B cell (primary cell): ENCODE measurements at regions of chr9 and their contacts with region 1.

Region 1: DNA sequence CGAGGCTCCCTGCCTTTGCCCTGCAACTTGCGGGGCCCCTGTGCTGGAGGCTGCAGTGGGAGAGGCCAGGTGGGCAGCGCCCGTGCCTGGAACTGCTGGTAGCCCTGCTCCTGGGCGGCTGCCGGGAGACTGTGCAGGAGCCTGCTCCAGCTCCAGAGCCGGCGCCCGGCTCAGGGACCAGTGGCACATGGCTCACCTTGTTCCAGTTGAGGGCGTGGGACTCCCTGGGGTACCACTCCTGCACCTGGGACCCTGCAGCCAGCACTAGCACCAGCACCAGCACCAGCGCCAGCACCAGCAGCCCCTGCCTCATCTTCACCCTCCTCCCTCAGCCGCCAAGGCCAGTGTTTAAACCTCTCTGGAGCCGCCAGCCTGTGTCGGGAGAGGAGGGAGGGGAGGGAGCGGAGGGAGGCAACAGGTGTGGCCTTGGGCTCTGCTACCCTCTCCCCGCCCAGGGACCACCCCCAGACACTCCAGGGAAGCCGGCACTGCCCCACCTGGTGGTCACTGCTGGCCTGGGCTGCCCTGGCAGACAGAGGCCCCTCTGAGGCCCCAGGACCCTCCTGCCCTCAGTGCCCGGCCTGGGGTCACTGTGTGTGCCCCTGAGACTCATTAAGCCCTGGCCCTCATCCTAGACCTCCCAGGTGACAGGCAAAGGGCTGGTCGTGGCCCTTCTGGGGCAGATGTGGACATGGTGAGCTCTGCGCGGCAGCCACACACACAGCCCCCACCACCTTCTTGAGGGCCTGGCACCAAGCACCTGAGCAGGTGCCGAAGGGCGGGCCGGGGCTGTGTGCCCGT is at the start of gene LCN10:
- DNase-seq: no peak
- ATAC-seq: peak; percentile 5
- H3K4me3 ChIP-seq: peak within 1 kb of the TSS; percentile 31 to 97 (median 77)
- H3K4me3 Mint-ChIP-seq: peak within 1 kb of the TSS; percentile 91
- H3K27ac ChIP-seq: peak within 1 kb of the TSS; percentile 82 to 83
- H3K27ac Mint-ChIP-seq: peak within 1 kb of the TSS; percentile 94
- H3K4me1 ChIP-seq: peaks cover 26 to 55% of the 10 kb centered on the region in 2 donors
- H3K4me1 Mint-ChIP-seq: peaks cover 47% of the 10 kb centered on the region
- H3K27me3 ChIP-seq: no peaks in the 10 kb centered on the region
- H3K27me3 Mint-ChIP-seq: no peaks in the 10 kb centered on the region
- CTCF ChIP-seq: no peak
- total RNA-seq, gene LCN10: 70.7 and 76.3 TPM in 2 replicates

Region 2: DNA sequence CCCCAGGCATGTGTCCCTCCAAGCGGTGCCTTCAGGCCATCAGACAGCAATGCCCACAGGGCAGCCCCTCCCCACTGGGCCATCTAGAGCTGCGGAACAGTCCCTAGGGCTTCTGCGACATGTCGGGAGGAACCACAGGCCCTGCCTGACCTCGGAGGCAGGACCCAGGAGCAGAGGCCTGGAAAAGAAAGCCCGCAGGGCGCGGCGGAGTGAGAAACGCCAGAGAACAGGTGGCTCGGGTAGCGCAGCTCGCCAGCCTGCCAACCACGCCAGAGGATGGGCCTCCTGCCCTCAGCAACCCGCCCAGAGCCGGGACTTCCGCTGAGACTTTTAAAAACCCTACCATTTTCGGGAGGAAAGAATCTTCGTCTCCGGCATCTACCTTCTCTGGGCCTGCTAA is 14.5 kb after region 1 on chr9:
- CTCF ChIA-PET with region 1: interaction called, 25 read pairs
- POLR2A ChIA-PET with region 1: interaction called, 26 read pairs
- intact Hi-C with region 1: loop called (anchors 2 kb)
- DNase-seq: no peak
- ATAC-seq: peak; percentile 54
- H3K4me3 ChIP-seq: no peak overlapping the region
- H3K4me3 Mint-ChIP-seq: peak overlapping the region; percentile 81
- H3K27ac ChIP-seq: peak overlapping the region; percentile 50 to 80
- H3K27ac Mint-ChIP-seq: peak overlapping the region; percentile 95
- H3K4me1 ChIP-seq: peaks cover 61 to 79% of the 10 kb centered on the region in 2 donors
- H3K4me1 Mint-ChIP-seq: peaks cover 56% of the 10 kb centered on the region
- H3K27me3 ChIP-seq: no peaks in the 10 kb centered on the region
- H3K27me3 Mint-ChIP-seq: no peaks in the 10 kb centered on the region
- CTCF ChIP-seq: no peak

Region 3: DNA sequence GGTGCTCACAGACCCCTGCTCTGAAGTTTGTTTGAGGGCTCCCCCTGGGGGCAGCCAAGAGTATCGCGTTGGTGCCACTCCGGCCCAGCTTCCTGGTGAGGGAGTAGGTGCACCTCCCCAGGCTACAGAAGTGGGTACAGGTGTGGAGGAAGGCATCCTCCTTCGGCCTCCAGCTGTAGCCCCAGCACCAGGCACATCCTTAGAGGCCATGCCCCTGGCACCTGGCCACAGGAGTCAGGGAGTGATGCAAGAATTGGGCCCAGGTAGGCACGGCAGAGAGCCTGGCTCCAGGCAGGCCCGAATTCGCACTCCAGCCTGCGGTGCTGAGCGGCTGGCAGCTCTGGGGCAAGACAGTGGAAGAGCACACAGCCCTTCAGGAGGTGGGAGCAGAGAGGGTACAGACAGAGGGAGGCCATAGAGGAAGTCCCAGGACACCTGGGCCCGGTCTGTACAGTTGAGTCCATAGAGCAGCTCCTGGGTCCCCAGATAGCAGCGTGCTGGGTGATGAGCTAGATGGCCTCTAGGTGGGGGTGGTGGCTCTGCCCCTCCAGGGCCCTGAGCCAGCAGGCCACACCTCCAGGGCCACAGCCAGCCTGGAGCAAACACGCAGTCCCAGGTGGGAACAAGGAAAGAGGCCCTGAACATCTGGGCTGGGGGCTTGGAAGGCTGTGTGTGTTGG is 325.2 kb after region 1 on chr9:
- CTCF ChIA-PET with region 1: no interaction called
- POLR2A ChIA-PET with region 1: no interaction called
- intact Hi-C with region 1: no loop called
- DNase-seq: peak; percentile 92
- ATAC-seq: peak; percentile 64
- H3K4me3 ChIP-seq: no peak overlapping the region
- H3K4me3 Mint-ChIP-seq: peak overlapping the region; percentile 57
- H3K27ac ChIP-seq: no peak overlapping the region
- H3K27ac Mint-ChIP-seq: peak overlapping the region; percentile 78
- H3K4me1 ChIP-seq: peaks cover 15 to 35% of the 10 kb centered on the region in 2 donors
- H3K4me1 Mint-ChIP-seq: peaks cover 19% of the 10 kb centered on the region
- H3K27me3 ChIP-seq: peaks cover 0 to 15% (median 1%) of the 10 kb centered on the region in 4 experiments
- H3K27me3 Mint-ChIP-seq: peaks cover 6% of the 10 kb centered on the region
- CTCF ChIP-seq: peak; percentile 78